HEK293 (cell line): ENCODE measurements at regions of chr17 and their contacts with region 1.

Region 1: GRCh38 chr17:51850201-51850600 is 308.3 kb downstream of the CA10 start:
- H3K4me3 ChIP-seq: no peak overlapping the region
- H3K27ac ChIP-seq: no peak overlapping the region
- H3K4me1 ChIP-seq: no peaks in the 10 kb centered on the region
- CTCF ChIP-seq: no peak

Region 2: GRCh38 chr17:51860954-51861561 is 10.9 kb after region 1 on chr17:
- CTCF ChIA-PET with region 1: interaction called, 22 read pairs
- POLR2A ChIA-PET with region 1: no interaction called
- H3K4me3 ChIP-seq: no peak overlapping the region
- H3K27ac ChIP-seq: no peak overlapping the region
- H3K4me1 ChIP-seq: no peaks in the 10 kb centered on the region
- CTCF ChIP-seq: peak; percentile 30; the same call in 1 of the 2 replicates

Region 3: DNA sequence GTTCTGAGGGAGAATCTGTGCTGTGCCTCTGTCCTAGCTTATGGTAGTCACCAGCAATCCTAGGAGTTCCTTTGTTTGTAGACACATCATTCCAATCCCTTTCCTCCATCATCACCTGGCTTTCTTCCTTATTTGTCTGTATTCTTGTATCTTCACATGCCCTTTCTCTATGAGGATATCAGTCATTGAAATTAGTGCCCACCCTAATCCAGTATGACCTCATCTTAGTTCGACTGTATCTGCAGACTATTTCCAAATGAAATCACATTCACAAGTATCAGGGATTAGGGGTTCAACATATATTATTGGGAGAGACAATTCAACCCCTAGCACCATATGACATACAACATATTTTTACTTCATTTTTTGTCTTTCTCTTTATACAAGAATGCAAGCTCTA is 34.6 kb after region 1 on chr17:
- CTCF ChIA-PET with region 1: no interaction called
- POLR2A ChIA-PET with region 1: no interaction called
- H3K4me3 ChIP-seq: no peak overlapping the region
- H3K27ac ChIP-seq: no peak overlapping the region
- H3K4me1 ChIP-seq: no peaks in the 10 kb centered on the region
- CTCF ChIP-seq: no peak